Heart right ventricle (tissue), 16 donors: ENCODE measurements at regions of chr10 and their contacts with region 1.

Region 1: GRCh38 chr10:125936331-125936730 is 40.0 kb downstream of the FANK1 start:
- DNase-seq: no peak
- ATAC-seq: no peak
- H3K4me3 ChIP-seq: no peak overlapping the region
- H3K27ac ChIP-seq: no peak overlapping the region
- H3K4me1 ChIP-seq: no peaks in the 10 kb centered on the region
- H3K27me3 ChIP-seq: no peaks in the 10 kb centered on the region
- CTCF ChIP-seq: no peak

Region 2: DNA sequence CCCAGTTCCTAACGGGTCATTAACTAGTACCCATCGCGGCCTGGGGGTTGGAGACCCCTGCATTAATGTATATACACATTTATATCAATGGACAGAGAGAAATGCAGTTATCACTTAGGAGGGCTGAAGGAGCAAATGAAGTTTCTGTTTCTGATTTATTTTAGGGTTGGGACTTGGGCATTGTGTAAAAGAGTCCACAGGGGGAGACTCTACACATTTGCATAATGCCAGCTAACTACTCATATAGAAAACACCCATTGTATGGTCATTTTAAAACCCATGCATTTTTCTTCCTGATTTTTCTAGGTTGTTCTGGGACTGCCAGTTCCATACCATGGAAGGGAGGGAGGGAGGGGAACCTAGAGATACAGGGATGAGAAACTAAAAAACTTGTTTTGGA is 89.4 kb before region 1 on chr10:
- intact Hi-C with region 1: no loop called
- DNase-seq: no peak
- ATAC-seq: no peak
- H3K4me3 ChIP-seq: no peak overlapping the region
- H3K27ac ChIP-seq: no peak overlapping the region
- H3K4me1 ChIP-seq: peaks cover 0 to 45% (median 19%) of the 10 kb centered on the region in 9 donors
- H3K27me3 ChIP-seq: no peaks in the 10 kb centered on the region
- CTCF ChIP-seq: no peak

Region 3: DNA sequence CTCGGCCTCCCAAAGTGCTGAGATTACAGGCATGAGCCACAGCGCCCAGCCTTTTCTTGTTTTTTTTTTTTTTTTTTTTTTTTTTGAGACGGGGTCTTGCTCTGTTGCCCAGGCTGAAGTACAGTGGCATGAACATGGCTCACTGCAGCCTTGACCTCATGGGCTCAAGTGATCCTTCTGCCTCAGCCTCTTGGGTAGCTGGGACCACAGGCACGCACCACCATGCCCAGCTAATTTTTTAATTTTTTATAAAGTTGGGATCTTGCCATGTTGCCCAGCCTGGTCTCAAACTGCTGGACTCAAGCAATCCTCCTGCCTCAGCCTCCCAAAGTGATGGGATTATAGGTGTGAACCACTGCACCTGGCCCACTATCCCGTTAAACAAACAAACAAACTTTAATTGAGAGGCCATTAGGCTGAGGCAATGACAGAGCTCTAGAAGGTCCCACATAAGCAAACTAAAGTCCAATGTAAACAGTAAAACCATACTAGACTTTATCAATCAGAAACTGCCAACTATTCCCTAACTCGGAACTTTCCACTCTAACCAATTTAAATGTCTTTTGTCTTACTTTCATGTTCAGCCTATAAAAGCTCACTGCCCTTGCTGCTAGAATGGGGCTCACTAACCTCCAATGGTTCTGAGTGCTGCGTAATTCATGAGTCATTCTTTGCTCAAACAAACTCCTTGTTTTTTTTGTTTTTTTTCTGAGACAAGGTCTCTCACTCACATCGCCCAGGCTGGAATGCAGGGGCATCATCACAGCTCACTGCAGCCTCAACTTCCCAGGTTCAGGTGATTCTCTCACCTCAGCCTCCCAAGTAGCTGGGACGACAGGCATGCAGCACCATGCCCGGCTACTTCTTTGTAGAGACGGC is 57.1 kb before region 1 on chr10:
- intact Hi-C with region 1: loop called in 1 of 10 experiments (anchors 2 kb)
- DNase-seq: no peak
- ATAC-seq: no peak
- H3K4me3 ChIP-seq: peak overlapping the region in 6 of 10 donors; percentile 4 to 40 (median 28)
- H3K27ac ChIP-seq: no peak overlapping the region
- H3K4me1 ChIP-seq: peaks cover 0 to 32% (median 10%) of the 10 kb centered on the region in 9 donors
- H3K27me3 ChIP-seq: no peaks in the 10 kb centered on the region
- CTCF ChIP-seq: no peak

Region 4: GRCh38 chr10:126511917-126512479 is 575.7 kb after region 1 on chr10:
- intact Hi-C with region 1: no loop called
- DNase-seq: no peak
- ATAC-seq: no peak
- H3K4me3 ChIP-seq: no peak overlapping the region
- H3K27ac ChIP-seq: no peak overlapping the region
- H3K4me1 ChIP-seq: no peaks in the 10 kb centered on the region
- H3K27me3 ChIP-seq: peaks cover 0 to 16% (median 0%) of the 10 kb centered on the region in 7 donors
- CTCF ChIP-seq: no peak

Region 5: DNA sequence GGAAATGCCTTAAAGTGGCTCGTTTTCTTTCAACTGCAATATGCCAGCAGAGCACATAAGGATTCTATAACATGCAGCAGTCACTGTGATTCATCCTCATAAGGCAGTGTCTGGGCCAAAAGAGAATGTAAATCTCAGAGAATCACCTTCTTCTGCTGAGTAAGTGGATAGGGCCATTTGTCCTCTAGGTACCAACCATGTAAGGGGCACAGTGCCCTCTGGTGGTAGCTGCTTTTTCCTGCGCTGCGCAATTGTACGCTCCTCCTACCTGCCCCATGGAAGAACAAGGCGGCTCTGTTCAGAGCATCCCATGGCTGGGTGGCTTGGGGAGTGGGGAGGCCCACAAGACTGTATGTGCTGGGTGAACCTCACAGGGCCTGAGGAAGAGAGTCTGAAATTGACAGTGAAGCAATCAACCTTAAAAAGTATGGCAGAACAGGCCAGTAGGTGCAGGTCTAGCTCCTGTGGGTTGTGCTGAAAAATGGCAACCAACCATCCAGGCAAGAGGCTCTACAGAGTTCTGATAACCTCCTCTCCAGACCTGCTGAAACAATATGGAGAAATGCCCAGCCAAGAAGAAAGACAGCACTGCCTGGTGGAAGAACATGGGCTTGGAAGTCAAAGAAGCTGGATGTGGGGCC is 812.8 kb after region 1 on chr10:
- intact Hi-C with region 1: loop called in 1 of 10 experiments (anchors 5 kb)
- DNase-seq: peak; percentile 53 to 56
- ATAC-seq: peak in 7 of 8 donors; percentile 69 to 86 (median 74)
- H3K4me3 ChIP-seq: no peak overlapping the region
- H3K27ac ChIP-seq: no peak overlapping the region
- H3K4me1 ChIP-seq: no peaks in the 10 kb centered on the region
- H3K27me3 ChIP-seq: peaks cover 0 to 3% (median 0%) of the 10 kb centered on the region in 7 donors
- CTCF ChIP-seq: peak; percentile 50 to 80 (median 75)